PC-3 (cell line): ENCODE measurements at regions of chr1 and their contacts with region 1.

Region 1: DNA sequence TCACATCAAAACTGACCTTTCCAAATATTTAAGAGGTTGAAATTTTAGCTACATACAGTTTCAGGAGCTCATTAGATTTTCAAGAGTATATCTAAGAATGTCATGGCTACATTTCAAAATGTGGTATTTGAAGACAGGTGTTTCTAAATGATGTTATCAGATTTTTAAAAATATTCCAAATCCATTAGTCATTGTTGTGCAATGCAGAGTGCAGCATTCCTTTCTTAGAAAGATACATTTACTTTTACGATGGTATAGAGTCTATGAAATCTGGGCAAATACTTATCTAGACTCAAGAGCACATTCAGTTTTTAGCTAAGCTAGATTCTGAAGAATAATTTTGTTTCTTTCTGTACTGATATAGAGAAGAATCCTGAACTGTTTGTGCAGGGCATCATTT is 230.3 kb downstream of the CHRM3 start:
- DNase-seq: peak; percentile 94
- ATAC-seq: peak; percentile 88
- H3K4me3 ChIP-seq: no peak overlapping the region; the same call in 1 of the 2 replicates
- H3K27ac ChIP-seq: no peak overlapping the region
- H3K4me1 ChIP-seq: peaks cover 22% of the 10 kb centered on the region
- H3K27me3 ChIP-seq: no peaks in the 10 kb centered on the region
- CTCF ChIP-seq: no peak

Region 2: GRCh38 chr1:239527051-239527693 is 89.5 kb before region 1 on chr1:
- CTCF ChIA-PET with region 1: no interaction called
- POLR2A ChIA-PET with region 1: no interaction called
- intact Hi-C with region 1: no loop called
- DNase-seq: no peak
- ATAC-seq: no peak
- H3K4me3 ChIP-seq: no peak overlapping the region
- H3K27ac ChIP-seq: no peak overlapping the region
- H3K4me1 ChIP-seq: no peaks in the 10 kb centered on the region
- H3K27me3 ChIP-seq: no peaks in the 10 kb centered on the region
- CTCF ChIP-seq: no peak

Region 3: DNA sequence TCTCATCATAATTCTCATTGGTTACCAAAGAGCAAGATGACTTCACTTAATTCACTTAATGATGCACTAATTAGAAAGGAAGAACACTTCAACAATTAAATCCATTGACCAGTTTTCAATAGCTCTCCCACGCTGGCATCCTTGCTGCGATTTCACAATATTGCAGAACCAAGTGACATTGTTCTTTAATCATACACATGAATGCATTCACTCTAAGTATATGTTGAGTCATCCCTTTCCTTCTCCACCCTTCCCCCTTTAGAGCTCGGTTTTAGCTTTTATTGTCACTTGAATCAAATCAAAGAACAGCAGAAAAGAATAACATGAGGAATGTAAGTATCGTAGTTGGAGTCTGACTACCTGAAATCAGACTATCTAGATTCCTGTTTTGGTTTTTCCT is 241.4 kb after region 1 on chr1:
- CTCF ChIA-PET with region 1: no interaction called
- POLR2A ChIA-PET with region 1: no interaction called
- intact Hi-C with region 1: loop called (anchors 1 kb)
- DNase-seq: peak; percentile 93
- ATAC-seq: peak; percentile 97
- H3K4me3 ChIP-seq: peak overlapping the region; percentile 53
- H3K27ac ChIP-seq: peak overlapping the region; percentile 57
- H3K4me1 ChIP-seq: peaks cover 18% of the 10 kb centered on the region
- H3K27me3 ChIP-seq: no peaks in the 10 kb centered on the region
- CTCF ChIP-seq: no peak